Caco-2 (cell line): ENCODE measurements at regions of chrX and their contacts with region 1.

Region 1: GRCh38 chrX:2781698-2782097 is 29.9 kb downstream of the XG start:
- DNase-seq: no peak
- H3K4me3 ChIP-seq: no peak overlapping the region
- H3K4me3 Mint-ChIP-seq: peak overlapping the region; percentile 58
- H3K27ac Mint-ChIP-seq: peak overlapping the region; percentile 94
- H3K4me1 ChIP-seq: peaks cover 22% of the 10 kb centered on the region
- H3K4me1 Mint-ChIP-seq: peaks cover 43% of the 10 kb centered on the region
- H3K27me3 ChIP-seq: no peaks in the 10 kb centered on the region
- H3K27me3 Mint-ChIP-seq: no peaks in the 10 kb centered on the region
- CTCF ChIP-seq: no peak

Region 2: DNA sequence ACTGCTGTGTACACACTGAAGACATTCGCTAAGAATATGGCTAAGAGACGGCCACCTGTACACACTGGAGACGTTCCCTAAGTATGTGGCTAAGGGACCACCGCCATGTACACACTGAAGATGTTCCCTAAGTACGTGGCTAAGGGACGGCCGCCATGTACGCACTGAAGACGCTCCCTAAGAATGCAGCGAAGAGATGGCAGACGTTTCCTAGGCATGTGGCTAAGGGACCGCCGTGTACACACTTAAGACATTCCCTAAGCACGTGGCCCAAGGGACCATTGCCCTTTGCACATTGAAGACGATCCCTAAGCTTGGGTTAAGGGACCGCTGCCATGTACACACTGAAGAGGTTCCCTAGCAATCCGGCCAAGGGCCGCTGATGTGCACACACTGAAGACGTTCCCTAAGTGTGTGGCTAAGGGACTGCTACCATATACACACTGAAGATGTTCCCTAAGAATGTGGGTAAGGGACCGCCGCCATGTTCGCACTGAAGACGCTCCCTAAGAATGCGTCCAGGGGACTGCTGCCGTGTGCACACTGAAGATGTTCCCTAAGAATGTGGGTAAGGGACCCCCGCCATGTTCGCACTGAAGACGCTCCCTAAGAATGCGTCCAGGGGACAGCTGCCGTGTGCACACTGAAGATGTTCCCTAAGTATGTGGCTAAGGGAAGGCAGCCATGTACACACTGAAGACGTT is 317.6 kb before region 1 on chrX:
- CTCF ChIA-PET with region 1: no interaction called
- POLR2A ChIA-PET with region 1: no interaction called
- intact Hi-C with region 1: no loop called
- DNase-seq: peak; percentile 60 to 86
- H3K4me3 ChIP-seq: no peak overlapping the region
- H3K4me3 Mint-ChIP-seq: no peak overlapping the region
- H3K27ac Mint-ChIP-seq: no peak overlapping the region
- H3K4me1 ChIP-seq: peaks cover 10% of the 10 kb centered on the region; the same call in 1 of the 2 replicates
- H3K4me1 Mint-ChIP-seq: peaks cover 18% of the 10 kb centered on the region
- H3K27me3 ChIP-seq: no peaks in the 10 kb centered on the region
- H3K27me3 Mint-ChIP-seq: no peaks in the 10 kb centered on the region
- CTCF ChIP-seq: no peak

Region 3: GRCh38 chrX:2767650-2768455 is 13.8 kb before region 1 on chrX:
- CTCF ChIA-PET with region 1: no interaction called
- POLR2A ChIA-PET with region 1: no interaction called
- intact Hi-C with region 1: loop called (anchors 1 kb)
- DNase-seq: peak; percentile 93 to 96
- H3K4me3 ChIP-seq: no peak overlapping the region
- H3K4me3 Mint-ChIP-seq: peak overlapping the region; percentile 51
- H3K27ac Mint-ChIP-seq: peak overlapping the region; percentile 98
- H3K4me1 ChIP-seq: peaks cover 28% of the 10 kb centered on the region
- H3K4me1 Mint-ChIP-seq: peaks cover 25% of the 10 kb centered on the region
- H3K27me3 ChIP-seq: no peaks in the 10 kb centered on the region
- H3K27me3 Mint-ChIP-seq: no peaks in the 10 kb centered on the region
- CTCF ChIP-seq: peak in 1 of 2 experiments; percentile 3

Region 4: DNA sequence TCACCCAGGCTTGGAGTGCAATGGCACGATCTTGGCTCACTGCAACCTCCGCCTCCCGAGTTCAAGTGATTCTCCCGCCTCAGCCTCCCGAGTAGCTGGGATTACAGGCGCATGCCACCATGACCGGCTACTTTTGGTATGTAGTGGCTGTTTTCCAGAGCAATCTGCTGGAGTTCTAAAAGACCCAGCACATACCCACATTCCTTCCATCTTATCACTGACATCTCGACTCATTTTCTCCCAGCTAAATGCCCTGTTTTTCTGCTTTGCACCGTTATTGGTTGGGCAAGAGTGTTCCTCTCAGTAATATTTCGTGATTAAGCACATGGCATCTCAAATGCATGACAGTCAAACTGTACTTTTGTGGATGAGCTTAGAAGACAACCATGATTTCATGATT is 878.1 kb after region 1 on chrX:
- CTCF ChIA-PET with region 1: no interaction called
- POLR2A ChIA-PET with region 1: no interaction called
- intact Hi-C with region 1: no loop called
- DNase-seq: no peak
- H3K4me3 ChIP-seq: no peak overlapping the region
- H3K4me3 Mint-ChIP-seq: no peak overlapping the region
- H3K27ac Mint-ChIP-seq: peak overlapping the region; percentile 29
- H3K4me1 ChIP-seq: peaks cover 9% of the 10 kb centered on the region; the same call in 1 of the 2 replicates
- H3K4me1 Mint-ChIP-seq: peaks cover 22% of the 10 kb centered on the region
- H3K27me3 ChIP-seq: no peaks in the 10 kb centered on the region
- H3K27me3 Mint-ChIP-seq: no peaks in the 10 kb centered on the region
- CTCF ChIP-seq: no peak